Esophagus squamous epithelium (tissue), 5 donors: ENCODE measurements at regions of chr6 and their contacts with region 1.

Region 1: DNA sequence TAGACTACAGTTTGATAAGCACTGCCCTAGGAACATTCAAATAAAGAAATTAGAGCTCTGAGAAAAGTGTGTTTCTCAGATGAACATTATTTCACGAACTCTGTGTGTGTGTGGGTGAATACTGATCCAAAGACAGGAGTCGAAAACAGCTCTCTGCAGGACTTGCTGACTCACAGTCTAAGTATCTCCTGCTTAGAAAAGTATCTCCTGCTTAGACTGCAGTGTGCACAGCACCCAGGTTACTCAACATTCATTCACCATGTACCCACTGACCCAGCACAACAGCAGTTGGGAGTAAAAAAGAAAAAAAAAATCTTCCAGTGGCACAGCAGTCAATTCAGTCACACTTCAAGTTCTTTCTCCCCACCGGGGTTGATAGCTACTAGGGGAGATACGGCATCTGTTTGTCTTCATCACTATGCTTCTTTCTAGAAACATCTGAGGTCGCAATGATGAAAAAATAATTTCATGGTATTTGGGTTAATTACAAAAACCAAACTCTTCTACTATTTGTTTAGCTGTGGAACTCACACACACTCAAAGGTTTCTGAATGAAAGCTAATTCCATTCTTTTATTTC is 48.0 kb downstream of the GCLC start:
- DNase-seq: no peak
- H3K4me3 ChIP-seq: no peak overlapping the region
- H3K27ac ChIP-seq: peak overlapping the region in 2 of 4 donors; percentile 4 to 48
- H3K4me1 ChIP-seq: peaks cover 0 to 19% (median 0%) of the 10 kb centered on the region in 3 donors
- H3K27me3 ChIP-seq: peaks cover 0 to 4% (median 0%) of the 10 kb centered on the region in 4 donors
- CTCF ChIP-seq: no peak
- POLR2A ChIP-seq: no peak

Region 2: DNA sequence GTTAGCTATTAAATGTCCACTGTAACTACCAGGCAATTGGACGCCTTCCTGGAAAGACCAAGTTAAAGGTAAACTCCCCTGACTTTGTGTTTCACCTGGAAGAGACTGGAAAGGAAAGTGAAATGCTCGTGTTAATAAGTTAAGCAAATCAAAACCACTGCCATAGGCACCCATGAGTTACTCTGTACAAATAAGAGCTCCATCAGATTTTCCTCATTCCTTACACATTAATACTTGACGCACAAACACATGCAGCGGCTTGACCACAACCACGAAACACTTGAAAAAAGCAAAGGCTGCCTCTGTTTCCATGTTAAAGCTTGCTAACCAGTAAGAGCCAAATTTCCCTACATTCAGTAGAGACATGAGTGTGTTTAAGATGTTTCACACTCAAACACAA is 368.0 kb before region 1 on chr6:
- intact Hi-C with region 1: no loop called
- DNase-seq: no peak
- H3K4me3 ChIP-seq: no peak overlapping the region
- H3K27ac ChIP-seq: no peak overlapping the region
- H3K4me1 ChIP-seq: peaks cover 0 to 14% (median 0%) of the 10 kb centered on the region in 3 donors
- H3K27me3 ChIP-seq: peaks cover 0 to 21% (median 0%) of the 10 kb centered on the region in 4 donors
- CTCF ChIP-seq: no peak
- POLR2A ChIP-seq: no peak

Region 3: DNA sequence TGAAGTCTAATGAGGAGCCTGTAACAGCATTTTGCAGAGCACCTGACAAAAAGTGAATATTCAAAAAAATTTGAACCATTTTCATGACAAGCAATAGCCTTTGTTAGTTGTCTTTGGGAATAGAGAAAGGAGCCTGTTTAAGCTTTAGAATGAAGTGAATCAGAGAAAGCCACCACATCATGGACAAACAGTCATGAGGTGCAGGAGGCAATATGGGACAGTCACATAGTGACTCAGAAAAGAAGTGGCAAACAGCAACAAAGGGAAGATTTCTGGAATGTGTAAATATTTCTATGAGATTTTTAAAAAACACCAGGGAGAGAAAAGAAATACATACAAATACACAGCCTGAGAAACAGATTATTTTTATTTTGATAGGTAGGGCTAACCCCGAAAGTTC is 162.1 kb after region 1 on chr6:
- intact Hi-C with region 1: loop called (anchors 5 kb)
- DNase-seq: no peak
- H3K4me3 ChIP-seq: no peak overlapping the region
- H3K27ac ChIP-seq: no peak overlapping the region
- H3K4me1 ChIP-seq: no peaks in the 10 kb centered on the region
- H3K27me3 ChIP-seq: peaks cover 0 to 21% (median 0%) of the 10 kb centered on the region in 4 donors
- CTCF ChIP-seq: no peak
- POLR2A ChIP-seq: no peak

Region 4: GRCh38 chr6:53725791-53726431 is 229.0 kb after region 1 on chr6:
- intact Hi-C with region 1: loop called (anchors 5 kb)
- DNase-seq: no peak
- H3K4me3 ChIP-seq: no peak overlapping the region
- H3K27ac ChIP-seq: no peak overlapping the region
- H3K4me1 ChIP-seq: peaks cover 0 to 28% (median 8%) of the 10 kb centered on the region in 3 donors
- H3K27me3 ChIP-seq: no peaks in the 10 kb centered on the region
- CTCF ChIP-seq: peak; percentile 85 to 97 (median 95)
- POLR2A ChIP-seq: no peak